MCF 10A (cell line): ENCODE measurements at regions of chr11 and their contacts with region 1.

Region 1: DNA sequence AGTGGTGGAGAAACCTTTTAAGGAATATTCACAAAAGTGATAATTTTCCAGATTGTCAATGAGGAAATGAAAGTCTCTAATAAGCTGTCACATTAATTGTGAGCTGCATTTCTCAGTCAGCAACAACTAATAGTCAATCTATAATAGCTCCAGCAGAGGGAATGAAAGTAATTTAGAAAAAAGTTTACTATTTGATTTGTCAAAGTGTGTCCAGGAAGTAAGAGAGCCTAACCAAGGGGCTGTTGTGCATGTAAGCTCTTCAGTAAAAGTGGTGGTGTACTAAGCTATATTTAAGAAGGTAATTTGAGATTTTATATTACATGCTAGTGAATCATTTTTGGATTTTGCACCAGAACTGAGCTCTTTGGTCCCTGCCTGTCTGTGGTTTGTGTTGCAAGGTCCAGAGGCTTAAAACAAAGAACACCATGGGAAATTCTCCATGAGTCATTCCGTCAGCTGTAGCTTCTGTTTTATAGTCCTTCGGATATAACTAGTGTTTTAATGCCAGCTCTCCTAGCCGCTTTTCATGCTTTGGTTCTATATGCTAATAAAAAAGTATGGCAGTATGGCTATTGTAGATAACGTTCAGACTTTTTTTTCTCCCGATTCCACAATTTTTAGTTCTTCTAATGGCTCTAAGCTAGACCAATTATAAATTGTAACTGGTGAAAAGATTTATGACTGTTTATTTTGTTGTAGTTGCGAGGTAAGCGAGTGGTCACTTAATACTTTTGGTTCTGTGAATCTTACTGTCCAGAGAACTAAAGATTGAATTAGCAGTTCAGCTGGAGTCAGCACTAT is 64.6 kb downstream of the ARHGEF12 start:
- DNase-seq: peak; percentile 98
- H3K4me3 Mint-ChIP-seq: peak overlapping the region; percentile 72
- H3K27ac Mint-ChIP-seq: peak overlapping the region; percentile 80
- H3K4me1 Mint-ChIP-seq: peaks cover 33% of the 10 kb centered on the region
- H3K27me3 Mint-ChIP-seq: no peaks in the 10 kb centered on the region
- CTCF ChIP-seq: no peak

Region 2: GRCh38 chr11:120344302-120345004 is 56.3 kb before region 1 on chr11:
- CTCF ChIA-PET with region 1: interaction called, 12 read pairs
- POLR2A ChIA-PET with region 1: interaction called, 34 read pairs
- intact Hi-C with region 1: no loop called
- DNase-seq: peak; percentile 56
- H3K4me3 Mint-ChIP-seq: peak overlapping the region; percentile 21
- H3K27ac Mint-ChIP-seq: no peak overlapping the region
- H3K4me1 Mint-ChIP-seq: peaks cover 54% of the 10 kb centered on the region
- H3K27me3 Mint-ChIP-seq: no peaks in the 10 kb centered on the region
- CTCF ChIP-seq: no peak

Region 3: DNA sequence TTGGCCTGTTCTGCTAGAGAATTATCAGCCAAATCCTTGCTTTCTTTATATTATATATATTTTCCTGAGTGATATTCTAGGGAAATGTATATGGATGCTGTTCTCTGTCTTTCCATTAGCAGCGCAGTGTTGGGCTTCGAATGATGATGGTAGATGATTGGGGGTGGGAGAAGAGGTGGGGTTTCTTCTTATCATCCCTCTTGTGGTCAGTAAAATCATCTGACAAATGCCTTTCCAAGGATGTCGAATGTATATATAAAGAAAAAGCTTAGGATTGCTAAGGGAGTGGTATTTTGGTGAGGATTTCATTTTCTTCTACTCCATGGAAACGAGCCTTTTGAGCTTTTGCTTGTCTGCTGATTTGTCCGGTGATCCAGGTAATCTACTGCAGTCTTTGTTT is 15.7 kb before region 1 on chr11:
- CTCF ChIA-PET with region 1: interaction called, 4 read pairs
- POLR2A ChIA-PET with region 1: interaction called, 28 read pairs
- intact Hi-C with region 1: no loop called
- DNase-seq: no peak
- H3K4me3 Mint-ChIP-seq: no peak overlapping the region
- H3K27ac Mint-ChIP-seq: no peak overlapping the region
- H3K4me1 Mint-ChIP-seq: peaks cover 27% of the 10 kb centered on the region
- H3K27me3 Mint-ChIP-seq: no peaks in the 10 kb centered on the region
- CTCF ChIP-seq: no peak

Region 4: GRCh38 chr11:120413480-120413879 is 12.7 kb after region 1 on chr11:
- CTCF ChIA-PET with region 1: no interaction called
- POLR2A ChIA-PET with region 1: interaction called, 49 read pairs
- intact Hi-C with region 1: no loop called
- DNase-seq: peak; percentile 20
- H3K4me3 Mint-ChIP-seq: peak overlapping the region; percentile 13
- H3K27ac Mint-ChIP-seq: peak overlapping the region; percentile 55
- H3K4me1 Mint-ChIP-seq: peaks cover 21% of the 10 kb centered on the region
- H3K27me3 Mint-ChIP-seq: no peaks in the 10 kb centered on the region
- CTCF ChIP-seq: no peak

Region 5: DNA sequence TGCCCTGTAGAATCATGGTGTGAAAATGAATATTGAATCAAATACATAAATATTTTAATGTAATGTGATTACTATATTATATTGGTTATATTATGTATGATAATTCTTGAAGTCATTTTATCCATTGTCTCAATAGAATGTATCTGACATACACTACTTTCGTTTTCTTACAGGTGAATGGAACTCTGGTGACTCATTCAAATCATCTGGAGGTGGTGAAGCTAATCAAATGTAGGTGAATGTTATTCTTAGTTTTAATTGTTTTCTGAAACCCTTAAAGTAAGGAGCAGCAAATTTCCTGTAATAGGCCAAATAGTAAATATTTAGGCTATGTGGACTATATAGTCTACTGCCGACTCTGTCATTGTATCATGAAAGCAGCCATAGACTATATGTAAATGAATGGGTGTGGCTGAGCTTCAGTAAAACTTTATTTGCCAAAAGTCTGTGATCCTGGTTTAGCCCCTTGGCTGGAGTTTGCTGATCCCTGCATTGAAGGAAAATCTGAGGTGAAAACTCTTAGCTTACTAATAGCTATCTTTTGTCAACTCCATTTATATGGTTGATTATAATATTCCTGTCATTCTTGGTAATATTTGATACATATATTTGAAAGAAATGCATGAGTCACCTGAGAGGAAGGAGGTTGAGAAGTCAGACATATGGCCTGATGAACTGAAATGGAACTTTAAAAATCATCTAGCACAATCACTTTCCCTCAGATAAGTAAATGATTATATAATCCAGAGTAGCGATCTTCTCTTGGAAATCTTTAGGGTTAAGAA is 23.6 kb after region 1 on chr11:
- CTCF ChIA-PET with region 1: interaction called, 3 read pairs
- POLR2A ChIA-PET with region 1: interaction called, 21 read pairs
- intact Hi-C with region 1: no loop called
- DNase-seq: peak; percentile 35
- H3K4me3 Mint-ChIP-seq: peak overlapping the region; percentile 38
- H3K27ac Mint-ChIP-seq: no peak overlapping the region
- H3K4me1 Mint-ChIP-seq: peaks cover 8% of the 10 kb centered on the region
- H3K27me3 Mint-ChIP-seq: no peaks in the 10 kb centered on the region
- CTCF ChIP-seq: no peak

Region 6: GRCh38 chr11:120432056-120433018 is 31.6 kb after region 1 on chr11:
- CTCF ChIA-PET with region 1: interaction called, 7 read pairs
- POLR2A ChIA-PET with region 1: interaction called, 41 read pairs
- intact Hi-C with region 1: loop called (anchors 1 kb)
- DNase-seq: peak; percentile 96
- H3K4me3 Mint-ChIP-seq: peak overlapping the region; percentile 65
- H3K27ac Mint-ChIP-seq: peak overlapping the region; percentile 89
- H3K4me1 Mint-ChIP-seq: peaks cover 15% of the 10 kb centered on the region
- H3K27me3 Mint-ChIP-seq: no peaks in the 10 kb centered on the region
- CTCF ChIP-seq: no peak